Common myeloid progenitor, CD34-positive (primary cell): ENCODE measurements at regions of chr11 and their contacts with region 1.

Region 1: DNA sequence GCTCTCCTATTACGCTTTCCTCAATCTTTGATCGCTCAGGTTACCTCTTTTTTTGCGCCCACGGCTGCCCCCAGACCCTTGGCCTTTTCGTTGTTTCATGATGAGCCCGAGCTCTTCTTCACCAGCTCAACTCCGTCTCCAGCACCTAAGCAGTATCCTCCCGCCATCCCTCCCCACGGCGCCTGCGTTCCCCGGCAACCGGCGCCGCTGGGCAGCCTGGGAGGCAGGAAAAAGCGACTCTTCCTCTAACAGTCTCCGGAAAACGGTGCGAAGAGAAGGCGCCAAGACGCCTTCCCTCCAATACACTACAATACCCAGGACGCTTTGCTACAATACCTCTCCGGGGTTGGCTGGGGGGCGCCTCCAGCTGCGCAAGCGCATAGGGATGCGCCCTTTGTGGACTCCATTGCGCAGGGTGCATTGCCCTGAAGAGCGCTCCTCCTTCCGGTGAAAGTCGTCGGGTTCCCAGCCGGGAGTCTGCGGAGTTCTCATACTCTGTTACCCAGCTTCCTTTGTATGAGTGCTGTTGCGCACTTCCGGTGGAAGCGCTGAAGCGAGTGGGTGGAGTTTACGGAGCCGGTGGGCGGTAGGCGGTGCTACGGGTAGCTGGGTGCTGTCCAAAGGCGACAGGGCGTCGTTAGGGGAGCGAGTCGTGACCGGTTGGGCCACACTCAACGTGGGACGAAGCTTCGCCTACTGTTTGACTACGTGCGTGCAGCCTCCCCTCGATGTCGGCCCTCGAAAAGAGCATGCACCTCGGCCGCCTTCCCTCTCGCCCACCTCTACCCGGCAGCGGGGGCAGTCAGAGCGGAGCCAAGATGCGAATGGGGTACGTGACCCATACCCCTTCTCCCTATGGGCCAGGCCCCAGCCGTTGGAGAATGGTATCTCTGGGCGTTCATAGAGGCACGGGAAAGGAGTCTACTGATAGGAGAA is at the starts of genes C2CD3 and PPME1:
- DNase-seq: peak; percentile 100
- H3K4me3 ChIP-seq: peak within 1 kb of the TSS; percentile 84 to 99 (median 93)
- H3K27ac ChIP-seq: peak within 1 kb of the TSS; percentile 70 to 90
- H3K4me1 ChIP-seq: peaks cover 16 to 30% (median 22%) of the 10 kb centered on the region in 4 experiments
- H3K27me3 ChIP-seq: no peaks in the 10 kb centered on the region

Region 2: GRCh38 chr11:74182635-74183034 is 11.7 kb after region 1 on chr11:
- CTCF ChIA-PET with region 1: interaction called, 10 read pairs
- POLR2A ChIA-PET with region 1: no interaction called
- DNase-seq: no peak
- H3K4me3 ChIP-seq: no peak overlapping the region
- H3K27ac ChIP-seq: no peak overlapping the region
- H3K4me1 ChIP-seq: no peaks in the 10 kb centered on the region
- H3K27me3 ChIP-seq: no peaks in the 10 kb centered on the region